ENCODE measurements at regions of chr5 and their contacts with region 1.

Region 1: DNA sequence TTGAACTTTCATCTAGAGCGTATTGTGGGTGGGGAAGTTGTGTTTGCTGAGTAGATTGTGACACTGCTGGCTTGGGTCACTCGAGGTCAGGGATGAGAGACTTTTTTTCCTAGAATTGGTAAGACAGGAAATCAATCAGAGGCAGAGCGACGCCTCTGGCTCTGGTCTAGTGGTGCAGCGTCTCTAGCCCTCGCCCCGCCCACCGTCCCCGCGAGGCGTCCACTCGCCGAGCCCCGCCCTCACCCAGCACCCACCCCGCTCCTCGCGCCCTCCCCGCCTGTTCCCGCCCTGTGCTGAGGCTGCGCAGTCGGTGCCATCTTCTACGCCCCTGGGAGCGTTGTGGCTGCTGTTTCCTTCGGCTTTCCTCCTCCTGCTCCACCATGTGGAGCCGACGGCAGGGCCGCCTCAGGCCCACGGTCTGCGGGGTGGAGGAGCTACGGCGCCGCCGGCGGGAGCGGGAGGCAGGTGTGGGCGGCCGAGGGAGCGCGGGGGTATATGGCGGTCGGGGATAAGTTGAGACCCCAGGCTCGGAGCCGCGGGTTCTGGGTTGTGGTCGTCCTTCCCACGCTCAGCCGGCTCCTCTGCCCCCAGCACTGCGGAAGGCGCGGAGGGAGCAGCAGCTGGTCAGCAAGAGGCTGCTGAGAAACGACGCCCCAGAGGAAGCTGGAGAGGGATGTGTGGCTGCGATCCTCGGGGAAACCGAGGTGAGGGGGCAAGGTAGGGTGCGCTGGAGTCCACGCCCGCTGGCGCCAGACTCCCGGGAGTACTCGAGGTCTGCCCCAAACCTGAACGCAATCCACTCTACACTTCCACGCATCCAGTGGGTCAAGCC is at the start of gene TMCO6:
- DNase-seq: peak; percentile 98
- ATAC-seq: peak; percentile 95
- H3K4me3 Mint-ChIP-seq: peak within 1 kb of the TSS; percentile 89
- H3K27ac Mint-ChIP-seq: peak within 1 kb of the TSS; percentile 94
- H3K4me1 Mint-ChIP-seq: peaks cover 46% of the 10 kb centered on the region
- H3K27me3 Mint-ChIP-seq: no peaks in the 10 kb centered on the region
- total RNA-seq, gene TMCO6: 30.5 to 36.5 TPM

Region 2: DNA sequence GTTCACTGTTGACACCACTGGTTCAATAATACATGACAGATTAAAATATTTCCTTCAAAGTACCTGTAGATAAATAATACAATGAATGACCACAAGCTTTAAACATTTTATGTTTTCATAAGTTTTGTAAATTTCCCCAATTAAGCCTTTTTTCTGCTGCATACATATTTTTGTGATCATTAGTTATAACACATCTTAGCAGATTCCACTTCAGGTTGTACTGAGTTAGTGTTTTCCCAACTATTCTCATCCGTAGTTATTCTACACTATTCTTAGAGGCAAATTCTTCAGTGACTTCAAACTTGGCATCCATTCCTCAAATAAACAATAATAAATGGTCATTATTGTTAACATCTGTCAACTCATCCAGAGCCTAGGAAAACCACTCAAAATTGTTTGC is 697.1 kb before region 1 on chr5:
- CTCF ChIA-PET with region 1: no interaction called
- POLR2A ChIA-PET with region 1: no interaction called
- DNase-seq: no peak
- ATAC-seq: no peak
- H3K4me3 Mint-ChIP-seq: no peak overlapping the region
- H3K27ac Mint-ChIP-seq: no peak overlapping the region
- H3K4me1 Mint-ChIP-seq: no peaks in the 10 kb centered on the region
- H3K27me3 Mint-ChIP-seq: peaks cover 47% of the 10 kb centered on the region

Region 3: GRCh38 chr5:140372971-140373487 is 266.3 kb before region 1 on chr5:
- CTCF ChIA-PET with region 1: interaction called, 28 read pairs
- POLR2A ChIA-PET with region 1: no interaction called
- DNase-seq: peak; percentile 59
- ATAC-seq: peak; percentile 63
- H3K4me3 Mint-ChIP-seq: no peak overlapping the region
- H3K27ac Mint-ChIP-seq: no peak overlapping the region
- H3K4me1 Mint-ChIP-seq: peaks cover 7% of the 10 kb centered on the region
- H3K27me3 Mint-ChIP-seq: no peaks in the 10 kb centered on the region

Region 4: GRCh38 chr5:140401362-140402257 is 237.8 kb before region 1 on chr5 and contains the start of gene ANKHD1:
- CTCF ChIA-PET with region 1: interaction called, 6 read pairs
- POLR2A ChIA-PET with region 1: interaction called, 12 read pairs
- DNase-seq: peak; percentile 99
- ATAC-seq: peak; percentile 88
- H3K4me3 Mint-ChIP-seq: no peak within 1 kb of the TSS
- H3K27ac Mint-ChIP-seq: no peak within 1 kb of the TSS
- H3K4me1 Mint-ChIP-seq: peaks cover 33% of the 10 kb centered on the region
- H3K27me3 Mint-ChIP-seq: no peaks in the 10 kb centered on the region
- total RNA-seq, gene ANKHD1: 108 to 112 TPM

Region 5: DNA sequence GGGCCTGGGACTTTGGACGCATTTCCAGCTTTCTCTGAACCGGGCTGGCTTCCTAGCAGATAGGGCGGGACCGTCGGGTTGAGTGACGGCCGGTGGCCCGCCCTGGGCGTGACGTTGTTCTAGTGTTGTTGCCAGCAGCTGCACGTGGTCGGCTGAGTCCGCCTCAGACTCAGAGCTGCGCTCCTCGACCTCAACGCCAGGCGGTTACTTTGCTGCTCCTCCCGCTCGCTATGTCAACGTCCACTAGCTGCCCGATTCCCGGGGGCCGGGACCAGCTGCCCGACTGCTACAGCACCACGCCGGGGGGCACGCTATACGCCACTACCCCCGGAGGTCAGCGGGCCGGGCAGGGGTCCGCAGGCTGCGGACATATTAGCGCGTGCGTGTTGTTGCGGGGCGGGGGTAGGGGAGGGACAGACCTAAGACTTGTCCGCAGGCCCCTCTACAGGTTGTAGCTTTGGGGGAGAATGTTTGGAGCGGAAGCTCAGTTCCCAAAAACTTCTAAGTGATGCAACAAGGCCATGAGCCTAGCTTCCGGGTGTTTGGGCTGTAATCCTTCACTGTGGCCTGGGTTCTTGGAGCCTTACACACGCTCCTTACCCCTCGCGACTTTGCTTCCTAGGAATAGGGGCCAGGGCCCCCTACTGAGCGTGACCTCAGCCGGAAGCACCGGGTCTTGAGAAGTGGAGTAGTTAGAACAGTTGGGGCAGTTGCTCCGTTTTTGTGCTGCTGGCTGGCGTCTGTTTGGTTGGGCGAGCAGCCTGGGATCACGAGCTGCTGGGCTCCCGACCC is 91.7 kb before region 1 on chr5 and contains the start of gene EIF4EBP3:
- CTCF ChIA-PET with region 1: interaction called, 20 read pairs
- POLR2A ChIA-PET with region 1: interaction called, 6 read pairs
- DNase-seq: peak; percentile 91
- ATAC-seq: peak; percentile 97
- H3K4me3 Mint-ChIP-seq: peak within 1 kb of the TSS; percentile 80
- H3K27ac Mint-ChIP-seq: peak within 1 kb of the TSS; percentile 95
- H3K4me1 Mint-ChIP-seq: peaks cover 42% of the 10 kb centered on the region
- H3K27me3 Mint-ChIP-seq: no peaks in the 10 kb centered on the region
- total RNA-seq, gene EIF4EBP3: 7.4 to 8.6 TPM

Region 6: DNA sequence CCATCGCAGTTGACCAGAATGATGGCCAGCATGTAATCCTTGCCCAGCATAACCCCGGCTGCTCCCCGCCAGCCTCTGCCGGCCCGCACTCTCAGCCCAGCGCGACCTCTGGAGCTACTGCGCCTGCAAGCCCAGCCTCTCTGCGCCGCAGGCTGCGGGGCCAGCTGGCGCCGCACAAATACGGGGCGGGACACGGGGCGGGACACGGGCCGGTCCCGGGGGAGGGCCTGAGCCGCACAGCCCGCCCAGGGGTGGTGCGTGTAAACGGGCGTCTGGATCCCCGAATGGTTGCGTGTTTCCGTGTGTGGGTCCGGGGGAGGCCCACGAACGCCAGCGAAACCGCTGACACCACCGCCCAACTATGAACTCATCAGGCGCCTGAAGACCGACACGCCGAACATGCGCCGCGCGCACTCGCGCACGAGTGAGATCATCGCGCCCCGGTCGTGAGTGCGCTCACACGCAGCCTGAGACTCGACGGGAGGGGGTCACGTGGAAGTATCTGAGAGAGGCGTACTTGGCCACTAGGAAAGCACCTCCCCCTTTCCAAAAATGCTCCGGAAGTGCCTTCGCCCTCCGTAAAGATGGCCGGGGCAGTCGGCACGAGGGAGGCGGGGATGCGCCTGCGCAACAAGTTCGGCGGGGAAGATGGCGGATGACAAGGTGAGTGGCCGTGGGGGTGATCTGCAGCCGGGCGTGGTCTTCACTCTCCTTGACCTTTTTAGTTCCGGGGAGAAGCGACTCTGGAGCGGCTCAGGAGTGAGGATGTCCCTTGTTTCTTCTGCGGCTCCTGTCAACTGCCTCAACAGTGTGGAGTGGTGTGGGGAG is 75.0 kb before region 1 on chr5 and contains the starts of genes APBB3 and SLC35A4:
- CTCF ChIA-PET with region 1: interaction called, 10 read pairs
- POLR2A ChIA-PET with region 1: interaction called, 4 read pairs
- DNase-seq: peak; percentile 99
- ATAC-seq: peak; percentile 92
- H3K4me3 Mint-ChIP-seq: peak within 1 kb of the TSS; percentile 89
- H3K27ac Mint-ChIP-seq: peak within 1 kb of the TSS; percentile 93
- H3K4me1 Mint-ChIP-seq: peaks cover 54% of the 10 kb centered on the region
- H3K27me3 Mint-ChIP-seq: no peaks in the 10 kb centered on the region
- total RNA-seq, gene APBB3: 24.1 to 25.0 TPM
- total RNA-seq, gene SLC35A4: 88.9 to 98.2 TPM

Region 7: GRCh38 chr5:140710899-140711552 is 71.7 kb after region 1 on chr5:
- CTCF ChIA-PET with region 1: interaction called, 10 read pairs
- POLR2A ChIA-PET with region 1: interaction called, 4 read pairs
- DNase-seq: peak; percentile 95
- ATAC-seq: peak; percentile 94
- H3K4me3 Mint-ChIP-seq: peak overlapping the region; percentile 96
- H3K27ac Mint-ChIP-seq: peak overlapping the region; percentile 93
- H3K4me1 Mint-ChIP-seq: peaks cover 18% of the 10 kb centered on the region
- H3K27me3 Mint-ChIP-seq: peaks cover 5% of the 10 kb centered on the region

Region 8: GRCh38 chr5:140785905-140786686 is 146.7 kb after region 1 on chr5 and contains the start of gene PCDHA1:
- CTCF ChIA-PET with region 1: no interaction called
- POLR2A ChIA-PET with region 1: no interaction called
- DNase-seq: no peak
- ATAC-seq: no peak
- H3K4me3 Mint-ChIP-seq: peak within 1 kb of the TSS; percentile 5
- H3K27ac Mint-ChIP-seq: no peak within 1 kb of the TSS
- H3K4me1 Mint-ChIP-seq: peaks cover 1% of the 10 kb centered on the region
- H3K27me3 Mint-ChIP-seq: peaks cover 3% of the 10 kb centered on the region
- total RNA-seq, gene PCDHA1: not detected

Measured in activated CD8-positive, alpha-beta T cell treated with anti-CD3 and anti-CD28 coated beads, Interleukin-2, amount 10 ng/mL, durations not matched to agents 7 days and 5 days (primary cell).